Psoas muscle (tissue), 8 donors: ENCODE measurements at regions of chr12 and their contacts with region 1.

Region 1: GRCh38 chr12:68040450-68041075 is 51.3 kb downstream of the IFNG-AS1 start:
- DNase-seq: peak in 1 of 2 donors; percentile 47
- ATAC-seq: peak; percentile 86 to 98 (median 91)
- H3K4me3 ChIP-seq: no peak overlapping the region
- H3K27ac ChIP-seq: no peak overlapping the region
- H3K4me1 ChIP-seq: no peaks in the 10 kb centered on the region
- H3K27me3 ChIP-seq: no peaks in the 10 kb centered on the region
- CTCF ChIP-seq: peak; percentile 83

Region 2: DNA sequence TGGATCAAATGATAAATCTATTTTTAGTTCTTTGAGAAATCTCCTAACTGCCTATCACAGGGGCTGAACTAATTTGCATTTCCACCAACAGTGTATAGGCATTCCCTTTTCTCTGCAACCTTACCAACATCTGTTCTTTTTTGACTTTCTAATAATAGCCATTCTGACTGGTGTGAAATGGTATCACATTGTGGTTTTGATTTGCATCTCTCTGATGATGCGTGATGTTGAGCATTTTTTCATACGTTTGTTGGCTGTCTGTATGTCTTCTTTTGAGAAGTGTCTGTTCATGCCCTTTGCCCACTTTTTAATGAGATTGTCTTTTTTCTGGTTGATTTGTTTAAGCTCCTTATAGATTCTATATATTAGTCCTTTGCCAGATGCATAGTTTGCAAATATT is 15.7 kb after region 1 on chr12:
- intact Hi-C with region 1: no loop called
- DNase-seq: no peak
- ATAC-seq: no peak
- H3K4me3 ChIP-seq: no peak overlapping the region
- H3K27ac ChIP-seq: no peak overlapping the region
- H3K4me1 ChIP-seq: no peaks in the 10 kb centered on the region
- H3K27me3 ChIP-seq: no peaks in the 10 kb centered on the region
- CTCF ChIP-seq: no peak

Region 3: GRCh38 chr12:68158432-68158831 is 117.9 kb after region 1 on chr12:
- intact Hi-C with region 1: loop called (anchors 2 to 5 kb)
- DNase-seq: no peak
- ATAC-seq: peak in 3 of 4 donors; percentile 52 to 86 (median 77)
- H3K4me3 ChIP-seq: no peak overlapping the region
- H3K27ac ChIP-seq: no peak overlapping the region
- H3K4me1 ChIP-seq: no peaks in the 10 kb centered on the region
- H3K27me3 ChIP-seq: no peaks in the 10 kb centered on the region
- CTCF ChIP-seq: peak; percentile 49

Region 4: DNA sequence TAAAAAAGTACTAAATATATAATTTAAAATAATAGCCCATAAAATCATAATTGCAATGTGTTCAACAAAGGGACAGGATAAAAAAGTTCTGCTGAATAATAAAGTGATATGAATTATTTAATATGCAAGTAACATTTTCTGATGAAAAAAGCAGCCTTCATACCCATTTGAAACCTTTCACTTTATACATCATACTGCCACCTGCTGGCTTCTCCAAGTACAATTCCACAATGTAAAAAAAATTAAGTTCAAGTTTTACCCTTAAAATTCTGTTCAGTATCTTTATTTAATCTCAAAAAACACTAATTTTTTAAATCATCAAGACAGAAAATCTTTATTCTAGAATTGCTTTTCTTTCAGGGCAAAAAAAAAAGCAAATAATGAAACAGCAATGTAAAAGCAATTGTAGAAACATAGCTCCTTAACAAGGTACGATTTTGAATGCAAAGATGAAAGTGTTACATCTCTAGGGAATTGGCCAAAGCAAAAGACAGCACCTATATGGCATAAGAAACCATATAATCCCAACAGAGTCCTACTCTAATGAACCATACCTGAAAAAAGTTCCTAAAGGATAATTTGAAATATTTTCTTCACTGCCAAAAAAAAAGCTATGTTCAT is 276.6 kb after region 1 on chr12:
- intact Hi-C with region 1: loop called (anchors 2 to 5 kb)
- DNase-seq: no peak
- ATAC-seq: peak in 1 of 4 donors; percentile 65
- H3K4me3 ChIP-seq: no peak overlapping the region
- H3K27ac ChIP-seq: no peak overlapping the region
- H3K4me1 ChIP-seq: peaks cover 4% of the 10 kb centered on the region
- H3K27me3 ChIP-seq: no peaks in the 10 kb centered on the region
- CTCF ChIP-seq: peak; percentile 72